Activated CD8-positive, alpha-beta memory T cell treated with anti-CD3 and anti-CD28 coated beads, Interleukin-2, amount 10 ng/mL, durations not matched to agents 7 days and 5 days (primary cell): ENCODE measurements at regions of chr14 and their contacts with region 1.

Region 1: DNA sequence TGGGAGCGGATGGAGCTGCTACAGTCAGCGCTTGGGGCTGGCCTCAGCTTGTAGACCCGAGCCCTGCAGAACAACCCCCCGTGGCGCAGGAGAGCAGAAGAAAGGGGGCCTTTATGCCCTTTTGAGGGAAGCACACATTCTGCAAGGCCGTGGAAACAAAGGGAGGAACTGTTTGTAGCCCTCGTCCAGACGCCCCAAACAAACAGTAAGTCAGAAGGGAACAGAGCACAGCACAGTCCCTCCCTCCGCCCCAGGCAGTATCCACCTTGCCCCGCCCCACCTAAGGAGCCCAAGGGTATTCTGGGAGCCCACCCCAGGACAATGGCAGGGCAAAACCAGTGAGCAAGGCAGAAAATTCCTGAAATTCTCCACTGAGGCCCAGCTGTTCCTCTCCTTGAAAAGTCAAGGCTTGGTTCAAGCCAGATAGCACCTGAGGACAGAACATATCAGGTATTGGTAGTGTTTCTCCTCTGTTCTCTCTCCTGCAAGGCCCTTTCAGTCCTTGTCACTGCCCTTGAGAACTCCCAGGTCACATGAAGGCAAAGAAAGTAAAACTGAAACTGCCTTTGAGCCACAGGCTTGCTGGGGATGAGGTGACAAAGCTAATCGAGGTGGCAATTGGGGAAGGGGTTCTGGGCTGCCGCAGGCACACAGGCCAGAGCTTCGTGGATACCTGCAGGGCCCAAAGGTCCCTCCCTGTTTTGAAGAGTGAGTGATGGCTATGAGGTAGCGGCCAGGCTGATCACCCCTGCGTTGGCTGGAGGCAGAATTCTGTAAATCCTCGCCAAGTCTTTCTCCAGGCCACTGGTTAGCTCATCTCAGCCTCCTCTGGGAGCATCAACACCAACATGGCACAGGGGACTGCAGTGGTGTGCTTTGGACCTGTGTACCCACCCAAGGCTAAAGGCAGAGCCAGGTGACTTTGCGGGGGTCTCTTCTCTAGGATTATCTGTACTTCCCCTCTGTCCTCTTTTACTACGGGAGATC is 499 bp downstream of the DGLUCY start:
- DNase-seq: peak; percentile 89
- ATAC-seq: peak; percentile 80
- H3K4me3 Mint-ChIP-seq: peak overlapping the region; percentile 98
- H3K27ac Mint-ChIP-seq: peak overlapping the region; percentile 96
- H3K4me1 Mint-ChIP-seq: peaks cover 66% of the 10 kb centered on the region
- H3K27me3 Mint-ChIP-seq: no peaks in the 10 kb centered on the region

Region 2: GRCh38 chr14:90903101-90903500 is 211.3 kb before region 1 on chr14:
- CTCF ChIA-PET with region 1: interaction called, 35 read pairs
- DNase-seq: peak; percentile 74
- ATAC-seq: peak; percentile 93
- H3K4me3 Mint-ChIP-seq: no peak overlapping the region
- H3K27ac Mint-ChIP-seq: peak overlapping the region; percentile 72
- H3K4me1 Mint-ChIP-seq: peaks cover 27% of the 10 kb centered on the region
- H3K27me3 Mint-ChIP-seq: no peaks in the 10 kb centered on the region

Region 3: GRCh38 chr14:91035855-91036254 is 78.5 kb before region 1 on chr14:
- CTCF ChIA-PET with region 1: interaction called, 12 read pairs
- DNase-seq: no peak
- ATAC-seq: peak; percentile 71
- H3K4me3 Mint-ChIP-seq: no peak overlapping the region
- H3K27ac Mint-ChIP-seq: peak overlapping the region; percentile 84
- H3K4me1 Mint-ChIP-seq: peaks cover 72% of the 10 kb centered on the region
- H3K27me3 Mint-ChIP-seq: no peaks in the 10 kb centered on the region

Region 4: GRCh38 chr14:91060351-91061055 is 53.9 kb before region 1 on chr14 and contains the start of gene RPS6KA5:
- CTCF ChIA-PET with region 1: interaction called, 125 read pairs
- DNase-seq: peak; percentile 100
- ATAC-seq: peak; percentile 84
- H3K4me3 Mint-ChIP-seq: peak within 1 kb of the TSS; percentile 76
- H3K27ac Mint-ChIP-seq: peak within 1 kb of the TSS; percentile 78
- H3K4me1 Mint-ChIP-seq: peaks cover 57% of the 10 kb centered on the region
- H3K27me3 Mint-ChIP-seq: no peaks in the 10 kb centered on the region
- total RNA-seq, gene RPS6KA5: 48.1 to 58.2 TPM

Region 5: GRCh38 chr14:91244501-91244901 is 130.1 kb after region 1 on chr14 and contains the start of gene GPR68:
- CTCF ChIA-PET with region 1: no interaction called
- DNase-seq: peak; percentile 72
- ATAC-seq: peak; percentile 12
- H3K4me3 Mint-ChIP-seq: peak within 1 kb of the TSS; percentile 86
- H3K27ac Mint-ChIP-seq: peak within 1 kb of the TSS; percentile 100
- H3K4me1 Mint-ChIP-seq: peaks cover 84% of the 10 kb centered on the region
- H3K27me3 Mint-ChIP-seq: no peaks in the 10 kb centered on the region
- total RNA-seq, gene GPR68: 44.5 to 48.0 TPM